ENCODE measurements at regions of chr16 and their contacts with region 1.

Region 1: GRCh38 chr16:31458844-31459721 is at the start of gene ARMC5:
- DNase-seq: peak; percentile 98
- H3K4me3 ChIP-seq: peak within 1 kb of the TSS; percentile 73 to 97 (median 78)
- H3K27ac ChIP-seq: peak within 1 kb of the TSS; percentile 97 to 99 (median 98)
- H3K4me1 ChIP-seq: peaks cover 25 to 50% (median 44%) of the 10 kb centered on the region in 4 donors
- H3K27me3 ChIP-seq: no peaks in the 10 kb centered on the region
- CTCF ChIP-seq: peak; percentile 45 to 80 (median 60)
- EP300 ChIP-seq: no peak
- POLR2A ChIP-seq: peak; percentile 65
- total RNA-seq, gene ARMC5: 3.2 to 17.6 (median 8.4) TPM

Region 2: DNA sequence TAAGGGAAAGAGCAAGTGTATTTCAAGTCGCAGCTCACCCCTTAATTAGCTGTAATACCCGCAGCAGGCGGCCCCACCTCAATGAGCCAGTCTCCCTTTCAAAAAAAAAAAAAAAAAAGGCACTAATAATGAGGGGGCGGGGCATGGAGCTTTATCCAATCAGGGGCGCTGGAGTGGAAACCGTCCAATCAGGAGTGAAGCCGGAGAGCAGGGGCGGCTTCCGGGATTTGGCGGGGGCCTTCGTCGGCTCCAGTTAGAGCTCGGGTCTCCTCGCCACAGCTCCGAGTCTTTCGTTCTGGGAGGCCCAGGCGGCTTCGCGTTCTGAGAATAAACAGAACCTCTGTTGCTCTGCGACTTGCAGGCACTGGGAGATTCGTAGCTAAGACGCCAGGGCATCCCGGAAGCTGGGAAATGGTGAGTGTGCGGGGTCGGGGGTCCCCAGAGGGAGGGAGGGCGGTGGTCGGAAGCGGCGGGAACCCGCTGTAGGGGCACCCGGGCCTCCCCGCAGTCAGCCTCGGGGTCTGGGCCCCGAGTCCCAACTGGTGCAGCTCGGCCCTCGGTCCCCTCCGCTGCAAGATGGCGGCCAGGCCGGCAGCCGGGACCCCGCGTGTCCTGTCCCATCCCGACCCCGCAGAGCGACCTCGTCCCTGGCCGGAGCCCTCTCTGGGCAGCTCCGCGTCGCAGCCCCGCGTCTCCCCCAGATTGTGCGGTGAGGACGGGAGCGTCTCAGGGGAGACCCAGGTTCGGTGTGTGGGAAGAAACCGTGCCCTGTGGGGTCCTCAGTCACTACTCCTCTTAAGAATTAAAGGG is 414.7 kb after region 1 on chr16 and contains the start of gene ZNF267:
- in situ Hi-C with region 1: loop called in 1 of 4 experiments (anchors 25 kb)
- intact Hi-C with region 1: no loop called
- DNase-seq: peak; percentile 95
- H3K4me3 ChIP-seq: peak within 1 kb of the TSS; percentile 94 to 100 (median 100)
- H3K27ac ChIP-seq: peak within 1 kb of the TSS; percentile 93 to 99 (median 98)
- H3K4me1 ChIP-seq: peaks cover 30 to 51% (median 37%) of the 10 kb centered on the region in 4 donors
- H3K27me3 ChIP-seq: no peaks in the 10 kb centered on the region
- CTCF ChIP-seq: no peak
- EP300 ChIP-seq: no peak
- POLR2A ChIP-seq: peak; percentile 89
- total RNA-seq, gene ZNF267: 3.4 to 14.1 (median 9.0) TPM